H1 (cell line): ENCODE measurements at regions of chr16 and their contacts with region 1.

Region 1: DNA sequence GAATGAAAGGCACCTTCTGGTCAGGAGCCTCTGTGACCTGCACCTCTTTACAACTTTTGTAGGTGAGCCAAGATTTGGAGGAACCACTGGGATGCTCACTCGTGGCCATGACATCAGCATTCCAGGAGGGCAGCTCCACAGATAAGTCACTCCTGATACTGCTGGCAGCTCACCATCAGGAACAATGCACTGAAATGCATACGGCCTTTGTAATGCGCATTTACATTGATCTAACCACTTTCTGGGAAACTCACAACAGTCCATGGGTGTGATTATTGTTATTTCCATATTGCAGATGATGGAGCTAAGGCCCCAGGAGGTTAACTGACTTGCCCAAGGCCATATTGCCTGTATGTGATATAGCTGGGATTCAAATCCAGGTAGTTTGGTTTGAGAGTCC is 34.3 kb upstream of the PMFBP1 start:
- DNase-seq: no peak
- H3K4me3 ChIP-seq: no peak overlapping the region
- H3K27ac ChIP-seq: no peak overlapping the region
- H3K4me1 ChIP-seq: no peaks in the 10 kb centered on the region
- H3K27me3 ChIP-seq: no peaks in the 10 kb centered on the region
- CTCF ChIP-seq: no peak
- EP300 ChIP-seq: no peak
- POLR2A ChIP-seq: no peak
- RAD21 ChIP-seq: no peak

Region 2: DNA sequence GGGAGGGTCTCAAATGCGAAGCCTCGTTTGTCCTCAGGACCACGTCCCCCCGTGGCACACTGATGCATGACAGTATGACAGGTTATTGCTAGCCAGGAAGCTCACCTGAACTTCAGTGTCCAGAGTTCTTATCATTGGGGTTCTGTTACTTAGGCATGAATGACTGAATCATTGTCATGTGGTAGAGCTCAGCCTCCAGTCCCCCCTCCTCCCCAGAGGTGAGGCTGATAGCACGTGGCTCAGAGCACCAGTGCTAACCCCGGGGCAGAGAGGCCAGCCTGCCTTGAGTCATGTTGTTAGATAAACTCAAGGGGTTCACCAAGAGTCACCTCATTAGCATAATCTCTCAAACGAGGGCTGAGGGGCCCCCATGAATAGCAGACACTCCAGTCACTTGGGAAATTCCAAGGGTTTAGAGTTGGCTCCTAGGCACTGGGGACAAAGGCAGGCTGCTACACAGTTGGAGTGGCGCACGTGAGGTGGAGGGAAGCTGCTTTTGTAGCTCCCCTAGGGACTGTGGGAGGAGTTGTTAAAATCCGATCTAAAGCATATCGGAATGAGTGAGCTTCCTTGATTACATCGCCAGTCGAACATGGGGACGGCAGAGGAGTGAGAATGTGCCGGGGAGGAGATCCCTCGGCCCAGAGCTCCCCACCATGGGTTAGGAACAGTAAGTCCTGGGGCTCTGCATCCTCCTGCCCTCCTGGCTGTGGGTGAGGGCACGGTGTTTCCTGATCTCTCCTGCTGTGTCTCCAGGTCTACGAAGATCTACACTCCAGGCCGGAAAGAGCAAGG is 94.4 kb before region 1 on chr16:
- CTCF ChIA-PET with region 1: no interaction called
- POLR2A ChIA-PET with region 1: no interaction called
- DNase-seq: no peak
- H3K4me3 ChIP-seq: no peak overlapping the region
- H3K27ac ChIP-seq: no peak overlapping the region
- H3K4me1 ChIP-seq: no peaks in the 10 kb centered on the region
- H3K27me3 ChIP-seq: no peaks in the 10 kb centered on the region
- CTCF ChIP-seq: no peak
- EP300 ChIP-seq: no peak
- POLR2A ChIP-seq: no peak
- RAD21 ChIP-seq: no peak

Region 3: GRCh38 chr16:72195609-72196008 is 10.7 kb before region 1 on chr16:
- CTCF ChIA-PET with region 1: interaction called, 12 read pairs
- POLR2A ChIA-PET with region 1: no interaction called
- DNase-seq: peak; percentile 7 to 59
- H3K4me3 ChIP-seq: no peak overlapping the region
- H3K27ac ChIP-seq: no peak overlapping the region
- H3K4me1 ChIP-seq: peaks cover 2 to 4% (median 2%) of the 10 kb centered on the region in 4 experiments; a peak in 4 of 7 replicates
- H3K27me3 ChIP-seq: no peaks in the 10 kb centered on the region
- CTCF ChIP-seq: peak; percentile 80
- EP300 ChIP-seq: no peak
- POLR2A ChIP-seq: no peak
- RAD21 ChIP-seq: peak; percentile 93 to 96